Posterior cingulate gyrus (tissue), 11 donors: ENCODE measurements at regions of chr11 and their contacts with region 1.

Region 1: DNA sequence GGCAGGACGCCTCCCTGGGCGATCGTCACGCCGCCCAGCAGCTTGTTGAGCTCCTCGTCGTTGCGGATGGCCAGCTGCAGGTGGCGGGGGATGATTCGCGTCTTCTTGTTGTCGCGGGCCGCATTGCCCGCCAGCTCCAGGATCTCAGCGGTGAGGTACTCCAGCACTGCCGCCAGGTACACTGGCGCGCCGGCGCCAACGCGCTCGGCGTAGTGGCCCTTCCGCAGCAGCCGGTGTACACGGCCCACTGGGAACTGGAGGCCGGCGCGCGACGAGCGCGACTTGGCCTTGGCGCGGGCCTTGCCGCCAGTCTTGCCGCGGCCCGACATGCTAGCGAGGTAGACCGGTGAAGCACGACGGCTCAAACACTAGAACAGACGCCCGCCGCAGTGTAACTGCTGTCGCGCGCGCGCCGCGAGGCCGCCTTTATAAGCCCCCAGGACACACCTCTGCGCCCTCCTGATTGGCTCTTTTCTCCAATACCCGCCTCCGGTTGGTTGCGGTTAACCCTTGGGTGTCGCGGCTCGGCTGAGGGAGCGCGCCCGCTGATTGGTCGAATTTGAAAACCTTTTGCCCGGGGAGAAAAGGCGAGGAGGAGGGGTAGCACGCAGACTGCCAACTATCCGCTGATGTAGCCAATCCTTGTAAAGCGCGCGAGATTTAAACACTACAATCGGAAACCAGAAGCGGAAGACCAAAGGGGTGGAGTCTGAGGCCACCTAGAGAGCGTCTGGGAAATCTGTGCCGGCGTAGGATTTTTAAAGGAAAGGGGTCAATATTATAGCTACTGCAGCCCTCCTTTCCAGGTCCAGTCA is 6.4 kb downstream of the DPAGT1 start:
- DNase-seq: peak; percentile 99 to 100 (median 100)

Region 2: GRCh38 chr11:118744046-118744445 is 351.2 kb before region 1 on chr11:
- intact Hi-C with region 1: no loop called
- DNase-seq: no peak

Region 3: GRCh38 chr11:119030329-119031049 is 64.8 kb before region 1 on chr11 and contains the start of gene SLC37A4:
- intact Hi-C with region 1: loop called (anchors 2 kb)
- DNase-seq: peak; percentile 94 to 100 (median 98)

Region 4: GRCh38 chr11:119222308-119222707 is 127.0 kb after region 1 on chr11:
- intact Hi-C with region 1: no loop called
- DNase-seq: no peak

Region 5: GRCh38 chr11:119282495-119282894 is 187.2 kb after region 1 on chr11:
- intact Hi-C with region 1: no loop called
- DNase-seq: no peak